B cell (primary cell): ENCODE measurements at regions of chr15 and their contacts with region 1.

Region 1: GRCh38 chr15:78195735-78196201 is 38.6 kb downstream of the ACSBG1 start:
- DNase-seq: peak; percentile 79
- ATAC-seq: peak; percentile 98
- H3K4me3 ChIP-seq: no peak overlapping the region
- H3K4me3 Mint-ChIP-seq: no peak overlapping the region
- H3K27ac ChIP-seq: no peak overlapping the region
- H3K27ac Mint-ChIP-seq: no peak overlapping the region
- H3K4me1 ChIP-seq: no peaks in the 10 kb centered on the region
- H3K4me1 Mint-ChIP-seq: peaks cover 2% of the 10 kb centered on the region
- H3K27me3 ChIP-seq: no peaks in the 10 kb centered on the region
- H3K27me3 Mint-ChIP-seq: no peaks in the 10 kb centered on the region
- CTCF ChIP-seq: peak; percentile 79

Region 2: DNA sequence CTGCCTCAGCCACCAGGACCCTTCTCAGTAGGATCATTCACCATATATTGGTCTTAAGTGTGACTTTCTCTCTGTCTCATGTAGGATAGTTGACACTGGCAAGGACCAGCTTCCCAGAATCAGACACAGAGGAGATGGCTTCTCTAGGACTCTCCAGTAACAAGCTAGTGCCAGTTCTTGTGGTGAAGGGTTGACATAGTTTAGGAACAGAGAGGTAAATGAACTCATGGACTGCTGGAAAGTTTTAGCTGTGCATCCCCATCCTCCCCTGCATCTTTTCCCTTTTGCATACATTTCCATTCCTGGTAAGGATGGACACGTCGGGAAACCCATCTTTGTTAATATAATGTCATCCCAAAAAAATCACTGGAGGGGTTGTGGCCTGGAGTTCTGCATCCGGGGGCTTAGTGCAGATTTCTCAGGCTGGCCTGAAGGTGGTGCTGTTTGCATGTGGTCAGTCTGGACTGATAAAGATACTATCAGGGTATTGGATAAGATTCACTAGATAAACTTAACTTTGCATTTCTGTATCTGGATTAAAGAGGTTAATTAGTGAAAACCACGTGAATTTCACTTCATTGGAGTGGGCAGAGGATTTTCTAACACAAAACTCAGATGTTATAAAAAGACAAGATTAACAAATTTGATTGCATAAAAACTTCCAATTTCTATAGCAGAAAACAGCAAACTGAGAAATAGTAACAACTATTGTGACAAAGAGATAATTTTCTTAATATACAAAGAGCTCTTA is 229.1 kb before region 1 on chr15:
- CTCF ChIA-PET with region 1: interaction called, 9 read pairs
- POLR2A ChIA-PET with region 1: no interaction called
- intact Hi-C with region 1: loop called (anchors 1 kb)
- DNase-seq: peak; percentile 62
- ATAC-seq: peak; percentile 68
- H3K4me3 ChIP-seq: no peak overlapping the region
- H3K4me3 Mint-ChIP-seq: no peak overlapping the region
- H3K27ac ChIP-seq: no peak overlapping the region
- H3K27ac Mint-ChIP-seq: no peak overlapping the region
- H3K4me1 ChIP-seq: no peaks in the 10 kb centered on the region
- H3K4me1 Mint-ChIP-seq: peaks cover 4% of the 10 kb centered on the region
- H3K27me3 ChIP-seq: no peaks in the 10 kb centered on the region
- H3K27me3 Mint-ChIP-seq: peaks cover 6% of the 10 kb centered on the region
- CTCF ChIP-seq: peak; percentile 84

Region 3: DNA sequence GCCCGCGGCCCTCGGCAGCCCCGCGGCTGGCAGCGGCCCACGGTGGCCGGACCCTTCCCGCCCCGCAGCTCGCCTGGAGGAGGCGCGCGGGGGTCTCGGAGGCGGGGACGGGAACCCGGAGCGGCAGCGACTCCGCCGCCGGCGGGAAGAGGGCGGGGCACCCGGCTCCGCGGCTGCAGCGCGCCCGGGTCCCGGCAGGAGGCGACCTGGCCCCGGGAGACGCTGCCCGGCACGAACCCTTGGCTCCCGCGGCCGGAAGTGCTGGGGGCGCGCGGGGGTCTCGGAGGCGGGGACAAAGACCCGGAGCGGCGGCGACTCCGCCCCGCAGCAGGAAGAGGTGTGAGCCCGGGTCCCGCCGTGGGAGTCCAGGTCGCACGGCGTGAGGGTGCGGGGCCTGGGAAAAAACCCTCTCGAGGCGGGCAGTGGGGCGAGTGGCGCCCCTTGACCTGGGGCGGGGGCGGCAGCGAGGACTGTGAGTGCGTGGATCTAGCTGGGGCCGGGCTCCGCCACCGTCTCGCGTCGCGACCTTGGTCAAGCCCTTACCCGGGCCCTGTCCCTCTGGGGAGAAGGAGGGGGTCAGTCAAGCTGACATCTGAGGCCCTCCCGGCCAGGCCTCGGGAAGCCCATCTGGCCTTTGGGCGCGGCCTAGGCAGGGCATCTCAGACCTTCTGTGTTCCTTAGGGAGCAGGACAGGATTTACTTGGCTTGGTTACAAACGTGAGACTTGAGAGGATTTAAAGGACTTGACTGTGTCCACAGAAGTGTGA is 64.3 kb before region 1 on chr15 and contains the start of gene CIB2:
- CTCF ChIA-PET with region 1: interaction called, 322 read pairs
- POLR2A ChIA-PET with region 1: interaction called, 11 read pairs
- intact Hi-C with region 1: loop called (anchors 1 kb)
- DNase-seq: peak; percentile 86
- ATAC-seq: peak; percentile 94
- H3K4me3 ChIP-seq: peak within 1 kb of the TSS; percentile 43 to 77 (median 72)
- H3K4me3 Mint-ChIP-seq: peak within 1 kb of the TSS; percentile 89
- H3K27ac ChIP-seq: peak within 1 kb of the TSS; percentile 69 to 86
- H3K27ac Mint-ChIP-seq: peak within 1 kb of the TSS; percentile 88
- H3K4me1 ChIP-seq: peaks cover 12 to 14% of the 10 kb centered on the region in 2 donors
- H3K4me1 Mint-ChIP-seq: peaks cover 14% of the 10 kb centered on the region
- H3K27me3 ChIP-seq: no peaks in the 10 kb centered on the region
- H3K27me3 Mint-ChIP-seq: no peaks in the 10 kb centered on the region
- CTCF ChIP-seq: peak; percentile 83
- total RNA-seq, gene CIB2: 3.2 and 3.8 TPM in 2 replicates

Region 4: GRCh38 chr15:78155355-78155939 is 40.3 kb before region 1 on chr15:
- CTCF ChIA-PET with region 1: interaction called, 38 read pairs
- POLR2A ChIA-PET with region 1: interaction called, 4 read pairs
- intact Hi-C with region 1: no loop called
- DNase-seq: no peak
- ATAC-seq: no peak
- H3K4me3 ChIP-seq: no peak overlapping the region
- H3K4me3 Mint-ChIP-seq: no peak overlapping the region
- H3K27ac ChIP-seq: no peak overlapping the region
- H3K27ac Mint-ChIP-seq: peak overlapping the region; percentile 28
- H3K4me1 ChIP-seq: peaks cover 6 to 7% of the 10 kb centered on the region in 2 donors
- H3K4me1 Mint-ChIP-seq: peaks cover 20% of the 10 kb centered on the region
- H3K27me3 ChIP-seq: no peaks in the 10 kb centered on the region
- H3K27me3 Mint-ChIP-seq: no peaks in the 10 kb centered on the region
- CTCF ChIP-seq: no peak

Region 5: GRCh38 chr15:78177447-78177873 is 18.3 kb before region 1 on chr15:
- CTCF ChIA-PET with region 1: interaction called, 83 read pairs
- POLR2A ChIA-PET with region 1: interaction called, 3 read pairs
- intact Hi-C with region 1: no loop called
- DNase-seq: peak; percentile 38
- ATAC-seq: no peak
- H3K4me3 ChIP-seq: no peak overlapping the region
- H3K4me3 Mint-ChIP-seq: no peak overlapping the region
- H3K27ac ChIP-seq: no peak overlapping the region
- H3K27ac Mint-ChIP-seq: no peak overlapping the region
- H3K4me1 ChIP-seq: peaks cover 29 to 30% of the 10 kb centered on the region in 2 donors
- H3K4me1 Mint-ChIP-seq: peaks cover 38% of the 10 kb centered on the region
- H3K27me3 ChIP-seq: no peaks in the 10 kb centered on the region
- H3K27me3 Mint-ChIP-seq: no peaks in the 10 kb centered on the region
- CTCF ChIP-seq: peak; percentile 59

Region 6: DNA sequence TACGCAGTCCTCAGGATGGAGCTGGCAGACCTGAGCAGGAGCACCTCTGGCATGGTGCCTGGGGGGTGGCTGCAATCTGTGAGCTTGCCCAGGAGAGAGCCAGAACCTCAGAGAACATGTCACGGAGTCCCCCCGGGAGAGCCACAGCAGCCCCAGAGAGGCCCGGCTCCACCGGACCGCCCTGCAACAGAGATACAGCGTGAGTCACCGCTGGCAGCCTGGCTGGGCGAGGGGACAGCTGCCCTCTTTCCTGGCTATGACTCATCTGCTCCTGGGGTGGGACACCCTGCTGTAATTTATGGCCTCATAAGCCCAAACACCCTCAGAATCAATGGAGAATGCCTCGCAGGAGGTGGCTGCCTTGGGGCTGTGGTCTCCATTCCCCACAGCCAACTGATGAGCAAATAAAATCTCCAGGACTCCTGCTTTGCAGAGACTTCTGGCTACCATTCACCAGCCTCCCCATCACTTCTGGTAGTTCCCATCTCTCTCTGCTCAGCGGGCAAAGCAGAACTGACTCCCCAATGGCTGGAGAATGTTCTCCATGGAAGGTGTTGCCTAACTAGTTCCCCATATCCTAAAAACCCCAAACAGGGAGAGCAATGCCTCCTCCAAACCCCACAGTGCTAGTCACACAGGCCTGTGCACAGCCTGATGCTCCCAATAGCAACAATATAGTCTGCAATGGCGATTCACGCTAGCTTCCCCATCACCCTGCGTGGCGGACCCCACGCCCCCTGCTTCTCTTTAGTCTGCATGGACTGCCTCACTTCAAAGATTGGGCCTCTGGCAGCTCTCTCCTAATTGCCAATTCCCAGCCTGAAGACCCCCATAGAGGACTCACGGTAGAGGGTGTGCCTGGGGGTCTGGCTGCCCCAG is 17.0 kb after region 1 on chr15:
- CTCF ChIA-PET with region 1: interaction called, 10 read pairs
- POLR2A ChIA-PET with region 1: no interaction called
- intact Hi-C with region 1: no loop called
- DNase-seq: no peak
- ATAC-seq: no peak
- H3K4me3 ChIP-seq: no peak overlapping the region
- H3K4me3 Mint-ChIP-seq: no peak overlapping the region
- H3K27ac ChIP-seq: no peak overlapping the region
- H3K27ac Mint-ChIP-seq: no peak overlapping the region
- H3K4me1 ChIP-seq: no peaks in the 10 kb centered on the region
- H3K4me1 Mint-ChIP-seq: no peaks in the 10 kb centered on the region
- H3K27me3 ChIP-seq: peaks cover 0 to 14% (median 0%) of the 10 kb centered on the region in 4 experiments
- H3K27me3 Mint-ChIP-seq: peaks cover 24% of the 10 kb centered on the region
- CTCF ChIP-seq: no peak

Region 7: GRCh38 chr15:78709263-78709882 is 513.6 kb after region 1 on chr15:
- CTCF ChIA-PET with region 1: no interaction called
- POLR2A ChIA-PET with region 1: no interaction called
- intact Hi-C with region 1: loop called (anchors 5 kb)
- DNase-seq: peak; percentile 70
- ATAC-seq: peak; percentile 98
- H3K4me3 ChIP-seq: no peak overlapping the region
- H3K4me3 Mint-ChIP-seq: peak overlapping the region; percentile 53
- H3K27ac ChIP-seq: no peak overlapping the region
- H3K27ac Mint-ChIP-seq: no peak overlapping the region
- H3K4me1 ChIP-seq: peaks cover 3 to 6% of the 10 kb centered on the region in 2 donors
- H3K4me1 Mint-ChIP-seq: peaks cover 9% of the 10 kb centered on the region
- H3K27me3 ChIP-seq: peaks cover 0 to 18% (median 3%) of the 10 kb centered on the region in 4 experiments
- H3K27me3 Mint-ChIP-seq: peaks cover 45% of the 10 kb centered on the region
- CTCF ChIP-seq: peak; percentile 88